ENCODE measurements at regions of chr2 and their contacts with region 1.

Region 1: DNA sequence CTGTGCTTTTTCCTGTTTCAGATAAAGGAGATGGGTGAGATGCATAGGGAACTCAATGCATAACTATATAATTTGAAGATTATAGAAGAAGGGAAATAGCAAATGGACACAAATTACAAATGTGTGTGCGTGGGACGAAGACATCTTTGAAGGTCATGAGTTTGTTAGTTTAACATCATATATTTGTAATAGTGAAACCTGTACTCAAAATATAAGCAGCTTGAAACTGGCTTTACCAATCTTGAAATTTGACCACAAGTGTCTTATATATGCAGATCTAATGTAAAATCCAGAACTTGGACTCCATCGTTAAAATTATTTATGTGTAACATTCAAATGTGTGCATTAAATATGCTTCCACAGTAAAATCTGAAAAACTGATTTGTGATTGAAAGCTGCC is 16.4 kb upstream of the MSH2 start:
- DNase-seq: no peak
- H3K4me3 Mint-ChIP-seq: no peak overlapping the region
- H3K27ac Mint-ChIP-seq: no peak overlapping the region
- H3K4me1 Mint-ChIP-seq: no peaks in the 10 kb centered on the region
- H3K27me3 Mint-ChIP-seq: no peaks in the 10 kb centered on the region
- CTCF ChIP-seq: no peak

Region 2: GRCh38 chr2:46893269-46893945 is 493.1 kb before region 1 on chr2:
- CTCF ChIA-PET with region 1: interaction called, 10 read pairs
- POLR2A ChIA-PET with region 1: no interaction called
- intact Hi-C with region 1: no loop called
- DNase-seq: peak; percentile 18
- H3K4me3 Mint-ChIP-seq: no peak overlapping the region
- H3K27ac Mint-ChIP-seq: peak overlapping the region; percentile 2
- H3K4me1 Mint-ChIP-seq: peaks cover 6% of the 10 kb centered on the region
- H3K27me3 Mint-ChIP-seq: no peaks in the 10 kb centered on the region
- CTCF ChIP-seq: no peak

Region 3: DNA sequence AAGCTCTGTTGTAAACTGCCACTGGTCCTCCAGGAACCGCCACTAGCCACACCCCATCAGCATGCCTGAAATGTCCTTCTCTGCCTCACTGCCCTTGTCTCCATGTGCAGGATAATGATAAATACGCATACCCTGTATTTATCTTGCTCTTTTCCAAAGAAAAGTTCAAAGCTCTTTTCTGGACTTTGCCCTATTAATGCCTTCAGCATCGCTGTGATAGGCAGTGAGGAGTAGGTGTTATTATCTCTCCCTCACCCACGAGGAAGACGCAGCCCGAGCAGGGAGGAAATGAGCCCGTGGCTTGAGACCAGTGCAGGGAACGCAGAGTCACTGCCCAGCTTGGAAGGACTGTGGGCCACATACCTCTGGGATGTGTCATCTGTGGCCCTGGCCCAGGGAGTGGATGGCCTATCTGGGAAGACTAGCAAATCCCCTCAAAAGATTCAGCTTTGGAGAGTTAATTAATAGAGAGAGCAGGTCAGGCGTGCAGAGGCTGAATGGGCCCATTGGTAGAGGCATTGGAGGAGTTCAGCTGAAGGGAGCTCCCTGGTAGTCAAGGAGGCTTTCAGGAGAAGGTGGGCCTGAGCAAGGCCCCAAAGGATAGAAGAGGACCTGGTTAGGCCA is 431.5 kb before region 1 on chr2:
- CTCF ChIA-PET with region 1: no interaction called
- POLR2A ChIA-PET with region 1: no interaction called
- intact Hi-C with region 1: no loop called
- DNase-seq: peak; percentile 57
- H3K4me3 Mint-ChIP-seq: peak overlapping the region; percentile 29
- H3K27ac Mint-ChIP-seq: peak overlapping the region; percentile 77
- H3K4me1 Mint-ChIP-seq: peaks cover 18% of the 10 kb centered on the region
- H3K27me3 Mint-ChIP-seq: no peaks in the 10 kb centered on the region
- CTCF ChIP-seq: no peak

Region 4: GRCh38 chr2:47334356-47335136 is 52.0 kb before region 1 on chr2:
- CTCF ChIA-PET with region 1: interaction called, 281 read pairs
- POLR2A ChIA-PET with region 1: interaction called, 10 read pairs
- intact Hi-C with region 1: loop called (anchors 1 kb)
- DNase-seq: no peak
- H3K4me3 Mint-ChIP-seq: no peak overlapping the region
- H3K27ac Mint-ChIP-seq: no peak overlapping the region
- H3K4me1 Mint-ChIP-seq: no peaks in the 10 kb centered on the region
- H3K27me3 Mint-ChIP-seq: no peaks in the 10 kb centered on the region
- CTCF ChIP-seq: no peak

Region 5: DNA sequence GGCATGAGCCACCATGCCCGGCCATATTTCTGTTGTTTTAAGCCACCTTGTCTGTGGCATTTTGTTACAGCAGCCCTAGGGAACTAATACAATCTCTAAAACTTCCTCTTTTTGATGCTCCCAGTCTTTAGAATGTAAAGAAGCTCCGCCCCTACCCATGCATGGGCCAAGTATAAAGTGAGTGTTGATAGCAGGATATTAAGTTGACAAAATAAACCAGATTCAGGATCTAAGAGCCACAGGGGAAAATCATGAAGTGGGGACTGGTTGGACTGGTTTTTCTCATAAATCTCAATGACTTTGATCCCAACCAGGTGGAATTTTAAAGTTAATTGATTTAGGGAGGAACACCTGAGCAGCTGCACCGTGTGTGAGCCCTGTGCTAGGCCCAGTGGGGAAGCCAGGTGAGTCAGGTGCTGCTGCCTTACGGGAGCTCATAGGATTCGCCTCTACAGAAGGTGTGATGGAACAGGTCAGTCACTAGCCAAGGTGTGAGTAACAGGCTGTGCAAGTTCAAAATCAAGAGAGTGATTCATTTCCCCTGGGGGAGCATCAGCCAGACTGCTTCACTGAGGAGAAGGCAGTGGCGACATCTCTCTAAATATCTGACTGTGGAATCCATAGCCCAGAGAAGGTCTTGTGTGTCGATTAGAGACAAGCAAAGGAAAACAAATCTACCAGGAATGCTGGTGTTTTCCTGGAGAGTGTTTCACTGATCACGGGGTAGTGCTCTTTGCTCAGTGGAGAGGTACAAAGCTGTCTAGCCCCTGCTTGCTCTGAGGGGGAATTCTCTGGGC is 46.6 kb before region 1 on chr2:
- CTCF ChIA-PET with region 1: interaction called, 281 read pairs
- POLR2A ChIA-PET with region 1: interaction called, 10 read pairs
- intact Hi-C with region 1: loop called (anchors 1 kb)
- DNase-seq: peak; percentile 93
- H3K4me3 Mint-ChIP-seq: no peak overlapping the region
- H3K27ac Mint-ChIP-seq: no peak overlapping the region
- H3K4me1 Mint-ChIP-seq: peaks cover 12% of the 10 kb centered on the region
- H3K27me3 Mint-ChIP-seq: no peaks in the 10 kb centered on the region
- CTCF ChIP-seq: no peak

Region 6: DNA sequence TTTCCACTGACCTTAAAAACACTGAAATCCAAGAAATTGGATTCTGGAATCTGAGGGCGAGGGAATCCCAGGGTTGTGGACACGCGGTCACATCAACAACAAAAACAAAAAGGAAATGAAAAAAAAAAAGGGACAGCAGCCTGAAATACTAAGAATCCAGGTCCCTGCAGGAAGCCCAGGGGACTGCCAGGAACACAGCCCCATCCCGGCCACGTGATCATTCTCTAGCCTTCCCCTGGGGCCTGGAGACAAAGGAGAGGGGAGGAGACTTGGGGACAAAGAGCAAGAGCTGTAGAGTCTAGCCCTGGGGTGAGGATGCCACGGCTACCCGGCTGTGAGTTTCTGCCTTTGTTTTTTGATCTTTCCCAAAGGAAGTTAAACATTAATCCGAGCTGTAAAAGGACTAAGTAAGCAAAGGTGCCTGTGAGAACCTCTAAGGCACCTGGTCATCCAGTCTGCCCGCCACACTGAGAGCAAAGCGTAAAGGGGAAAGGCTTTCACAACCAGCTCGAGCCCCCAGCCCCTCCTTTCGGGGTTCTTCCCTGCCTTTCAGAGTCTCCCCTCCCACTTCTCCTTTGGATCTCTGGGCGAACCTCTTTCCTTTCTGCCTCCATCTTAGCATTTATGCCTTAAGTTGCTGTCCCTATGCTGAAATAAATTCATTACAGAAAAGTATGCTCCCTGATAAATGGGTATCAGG is 41.5 kb before region 1 on chr2:
- CTCF ChIA-PET with region 1: interaction called, 281 read pairs
- POLR2A ChIA-PET with region 1: interaction called, 4 read pairs
- intact Hi-C with region 1: no loop called
- DNase-seq: peak; percentile 39
- H3K4me3 Mint-ChIP-seq: no peak overlapping the region
- H3K27ac Mint-ChIP-seq: no peak overlapping the region
- H3K4me1 Mint-ChIP-seq: peaks cover 13% of the 10 kb centered on the region
- H3K27me3 Mint-ChIP-seq: peaks cover 11% of the 10 kb centered on the region
- CTCF ChIP-seq: no peak

Region 7: GRCh38 chr2:47373747-47374146 is 12.8 kb before region 1 on chr2:
- CTCF ChIA-PET with region 1: interaction called, 20 read pairs
- POLR2A ChIA-PET with region 1: no interaction called
- intact Hi-C with region 1: no loop called
- DNase-seq: no peak
- H3K4me3 Mint-ChIP-seq: no peak overlapping the region
- H3K27ac Mint-ChIP-seq: no peak overlapping the region
- H3K4me1 Mint-ChIP-seq: no peaks in the 10 kb centered on the region
- H3K27me3 Mint-ChIP-seq: no peaks in the 10 kb centered on the region
- CTCF ChIP-seq: no peak

Region 8: DNA sequence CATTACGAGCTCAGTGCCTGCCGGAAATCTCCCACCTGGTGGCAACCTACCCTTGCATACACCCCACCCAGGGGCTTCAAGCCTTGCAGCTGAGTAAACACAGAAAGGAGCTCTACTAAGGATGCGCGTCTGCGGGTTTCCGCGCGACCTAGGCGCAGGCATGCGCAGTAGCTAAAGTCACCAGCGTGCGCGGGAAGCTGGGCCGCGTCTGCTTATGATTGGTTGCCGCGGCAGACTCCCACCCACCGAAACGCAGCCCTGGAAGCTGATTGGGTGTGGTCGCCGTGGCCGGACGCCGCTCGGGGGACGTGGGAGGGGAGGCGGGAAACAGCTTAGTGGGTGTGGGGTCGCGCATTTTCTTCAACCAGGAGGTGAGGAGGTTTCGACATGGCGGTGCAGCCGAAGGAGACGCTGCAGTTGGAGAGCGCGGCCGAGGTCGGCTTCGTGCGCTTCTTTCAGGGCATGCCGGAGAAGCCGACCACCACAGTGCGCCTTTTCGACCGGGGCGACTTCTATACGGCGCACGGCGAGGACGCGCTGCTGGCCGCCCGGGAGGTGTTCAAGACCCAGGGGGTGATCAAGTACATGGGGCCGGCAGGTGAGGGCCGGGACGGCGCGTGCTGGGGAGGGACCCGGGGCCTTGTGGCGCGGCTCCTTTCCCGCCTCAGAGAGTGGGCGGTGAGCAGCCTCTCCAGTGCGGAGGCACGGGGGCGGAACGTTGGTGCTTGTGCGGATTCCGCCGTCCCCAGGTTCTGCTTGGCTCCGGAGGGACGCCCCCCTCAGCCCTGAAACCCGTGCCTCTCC is 16.5 kb after region 1 on chr2 and contains the start of gene MSH2:
- CTCF ChIA-PET with region 1: interaction called, 11 read pairs
- POLR2A ChIA-PET with region 1: no interaction called
- intact Hi-C with region 1: no loop called
- DNase-seq: peak; percentile 88
- H3K4me3 Mint-ChIP-seq: peak within 1 kb of the TSS; percentile 99
- H3K27ac Mint-ChIP-seq: peak within 1 kb of the TSS; percentile 80
- H3K4me1 Mint-ChIP-seq: peaks cover 13% of the 10 kb centered on the region
- H3K27me3 Mint-ChIP-seq: no peaks in the 10 kb centered on the region
- CTCF ChIP-seq: no peak
- total RNA-seq, gene MSH2: 7.6 and 8.7 TPM in 2 replicates

Measured in MCF 10A (cell line).